ENCODE measurements at regions of chr1 and their contacts with region 1.

Region 1: DNA sequence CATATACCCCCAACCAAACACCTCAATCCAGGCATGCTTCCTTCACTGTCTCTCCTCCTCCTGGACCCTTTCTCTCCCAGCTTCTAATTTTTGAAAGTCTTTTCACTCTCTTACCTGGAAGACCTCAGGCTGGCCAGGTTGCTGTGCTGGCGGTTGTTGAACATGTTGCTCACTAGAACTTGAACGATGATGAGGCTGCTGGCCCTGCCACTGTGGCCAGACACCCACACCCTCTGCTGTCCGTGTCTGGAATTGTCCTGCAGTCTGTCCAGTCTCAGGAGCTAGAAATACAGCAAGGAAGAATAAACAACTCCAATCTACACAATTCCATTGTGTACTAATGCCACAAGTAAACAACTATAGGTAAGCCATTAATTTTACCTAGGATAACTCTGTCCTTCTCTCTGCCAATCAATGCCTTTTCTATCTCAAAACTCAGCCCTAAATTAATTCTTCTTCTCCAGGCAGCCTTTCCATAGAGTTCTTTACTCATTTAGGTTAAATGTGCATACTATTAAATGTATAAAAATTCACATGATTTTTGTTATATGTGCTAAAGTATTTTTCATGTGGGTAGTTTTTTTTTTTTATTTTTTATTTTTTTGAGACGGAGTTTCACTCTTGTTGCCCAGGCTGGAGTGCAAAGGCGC is 5.1 kb upstream of the CTSK start:
- DNase-seq: peak; percentile 61
- H3K4me3 ChIP-seq: no peak overlapping the region
- H3K27ac ChIP-seq: no peak overlapping the region
- H3K4me1 ChIP-seq: peaks cover 14% of the 10 kb centered on the region
- H3K27me3 ChIP-seq: no peaks in the 10 kb centered on the region
- CTCF ChIP-seq: peak; percentile 90 to 95

Region 2: GRCh38 chr1:150259758-150260669 is 553.2 kb before region 1 on chr1:
- CTCF ChIA-PET with region 1: no interaction called
- dilution Hi-C with region 1: no loop called
- in situ Hi-C with region 1: no loop called
- intact Hi-C with region 1: loop called (anchors 5 kb)
- DNase-seq: peak; percentile 56
- H3K4me3 ChIP-seq: peak overlapping the region in 2 of 3 experiments; percentile 2 to 11
- H3K27ac ChIP-seq: peak overlapping the region; percentile 19
- H3K4me1 ChIP-seq: peaks cover 45% of the 10 kb centered on the region
- H3K27me3 ChIP-seq: no peaks in the 10 kb centered on the region
- CTCF ChIP-seq: no peak

Region 3: GRCh38 chr1:150548632-150549495 is 264.3 kb before region 1 on chr1 and contains the start of gene ADAMTSL4:
- CTCF ChIA-PET with region 1: no interaction called
- dilution Hi-C with region 1: no loop called
- in situ Hi-C with region 1: loop called in 1 of 2 experiments (anchors 10 kb)
- intact Hi-C with region 1: no loop called
- DNase-seq: peak; percentile 60
- H3K4me3 ChIP-seq: peak within 1 kb of the TSS; percentile 50 to 63 (median 61)
- H3K27ac ChIP-seq: peak within 1 kb of the TSS; percentile 37
- H3K4me1 ChIP-seq: peaks cover 13% of the 10 kb centered on the region
- H3K27me3 ChIP-seq: no peaks in the 10 kb centered on the region
- CTCF ChIP-seq: peak in 1 of 2 donors; percentile 11
- total RNA-seq, gene ADAMTSL4: 2.9 to 98.0 TPM

Region 4: GRCh38 chr1:150621497-150622302 is 191.5 kb before region 1 on chr1:
- CTCF ChIA-PET with region 1: no interaction called
- dilution Hi-C with region 1: no loop called
- in situ Hi-C with region 1: no loop called
- intact Hi-C with region 1: loop called (anchors 1 kb)
- DNase-seq: no peak
- H3K4me3 ChIP-seq: no peak overlapping the region
- H3K27ac ChIP-seq: peak overlapping the region; percentile 30
- H3K4me1 ChIP-seq: peaks cover 62% of the 10 kb centered on the region
- H3K27me3 ChIP-seq: no peaks in the 10 kb centered on the region
- CTCF ChIP-seq: peak; percentile 60 to 65

Region 5: GRCh38 chr1:150720703-150721102 is 92.5 kb before region 1 on chr1 and contains the start of gene HORMAD1:
- CTCF ChIA-PET with region 1: no interaction called
- dilution Hi-C with region 1: loop called (anchors 5 kb)
- in situ Hi-C with region 1: no loop called
- intact Hi-C with region 1: no loop called
- DNase-seq: no peak
- H3K4me3 ChIP-seq: no peak within 1 kb of the TSS
- H3K27ac ChIP-seq: no peak within 1 kb of the TSS
- H3K4me1 ChIP-seq: no peaks in the 10 kb centered on the region
- H3K27me3 ChIP-seq: no peaks in the 10 kb centered on the region
- CTCF ChIP-seq: no peak
- total RNA-seq, gene HORMAD1: not detected

Region 6: DNA sequence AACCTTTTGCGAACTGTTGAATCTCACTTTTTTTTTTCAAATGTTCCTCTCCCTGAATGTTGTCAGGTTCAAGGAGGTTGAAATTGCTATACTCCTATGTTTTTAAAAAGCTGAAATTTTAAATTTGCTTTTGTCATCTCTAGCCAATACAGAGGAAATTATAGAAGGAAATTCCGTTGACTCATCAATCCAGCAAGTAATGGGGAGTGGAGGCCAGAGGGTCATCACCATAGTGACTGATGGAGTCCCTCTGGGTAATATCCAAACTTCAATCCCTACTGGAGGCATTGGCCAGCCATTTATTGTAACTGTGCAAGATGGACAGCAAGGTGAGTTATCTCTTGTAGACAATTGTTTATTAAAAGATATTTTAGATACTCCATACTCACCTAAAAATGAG is 293.7 kb after region 1 on chr1:
- CTCF ChIA-PET with region 1: no interaction called
- dilution Hi-C with region 1: no loop called
- in situ Hi-C with region 1: no loop called
- intact Hi-C with region 1: no loop called
- DNase-seq: peak; percentile 56
- H3K4me3 ChIP-seq: no peak overlapping the region
- H3K27ac ChIP-seq: no peak overlapping the region
- H3K4me1 ChIP-seq: no peaks in the 10 kb centered on the region
- H3K27me3 ChIP-seq: no peaks in the 10 kb centered on the region
- CTCF ChIP-seq: no peak